H1 (cell line): ENCODE measurements at regions of chr2 and their contacts with region 1.

Region 1: DNA sequence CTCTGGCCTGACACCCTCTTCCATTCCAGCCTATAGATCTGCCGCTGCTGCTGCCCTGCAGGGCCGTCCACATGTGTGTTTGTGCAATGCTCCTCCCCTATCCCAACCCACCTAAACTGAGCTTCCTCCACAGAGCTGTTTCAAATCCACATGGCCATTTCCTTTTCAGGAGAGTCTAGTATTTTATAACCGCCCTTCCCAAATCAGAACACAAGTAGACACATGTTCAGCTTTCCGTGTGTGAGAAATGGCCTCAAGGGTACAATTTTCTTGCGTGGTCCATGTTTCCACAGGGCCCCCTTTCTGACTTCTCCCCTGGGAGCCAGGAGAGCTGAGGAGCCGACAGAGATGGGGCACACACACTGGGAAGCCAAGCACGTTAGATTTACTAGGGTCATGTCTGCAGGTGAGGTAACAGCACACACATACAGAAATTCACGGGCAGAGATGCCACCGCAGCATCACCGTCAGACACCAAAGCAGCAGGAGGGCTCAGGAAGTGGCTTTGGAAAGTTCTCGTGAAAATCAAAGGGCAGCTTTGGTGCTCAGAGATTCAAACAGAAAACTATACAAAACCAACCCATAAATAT is 102.9 kb upstream of the TGFA start:
- DNase-seq: peak in 1 of 2 experiments; percentile 43
- H3K4me3 ChIP-seq: no peak overlapping the region
- H3K27ac ChIP-seq: no peak overlapping the region
- H3K4me1 ChIP-seq: peaks cover 0 to 5% (median 0%) of the 10 kb centered on the region in 4 experiments; a peak in 2 of 7 replicates
- H3K27me3 ChIP-seq: peaks cover 2 to 7% (median 3%) of the 10 kb centered on the region in 4 experiments; a peak in 5 of 7 replicates
- CTCF ChIP-seq: no peak
- EP300 ChIP-seq: no peak
- POLR2A ChIP-seq: peak in 1 of 2 experiments; percentile 8; a peak in 1 of 3 replicates
- RAD21 ChIP-seq: no peak

Region 2: DNA sequence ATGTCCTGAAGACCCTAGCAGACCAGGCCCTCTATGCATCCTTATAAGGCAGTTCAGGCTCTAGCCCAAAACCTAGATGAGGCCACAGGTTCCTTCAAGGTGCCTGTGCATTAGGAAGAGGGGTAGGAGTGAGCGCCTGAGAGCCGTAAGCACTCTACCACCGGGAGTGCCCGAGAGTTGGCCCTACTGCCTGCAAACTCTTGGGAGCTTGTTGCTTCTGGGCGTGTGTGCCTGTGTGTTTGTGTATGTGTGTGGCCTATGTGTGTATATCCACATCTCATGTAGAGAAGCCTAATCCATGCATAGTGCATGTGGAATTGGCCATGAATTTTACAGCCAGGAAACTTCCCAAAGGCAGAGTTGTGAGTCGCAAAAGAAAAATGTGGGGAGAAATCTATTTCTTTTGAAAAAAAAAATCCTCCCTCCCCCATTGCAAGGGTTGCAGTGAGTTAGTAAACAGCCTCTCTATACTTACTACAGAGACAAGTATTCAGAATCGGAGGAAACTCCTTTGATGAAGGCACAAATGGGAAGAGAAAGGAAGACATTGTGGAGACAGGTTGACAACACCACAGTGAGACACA is 14.7 kb after region 1 on chr2:
- CTCF ChIA-PET with region 1: interaction called, 18 read pairs
- POLR2A ChIA-PET with region 1: interaction called, 5 read pairs
- DNase-seq: no peak
- H3K4me3 ChIP-seq: no peak overlapping the region
- H3K27ac ChIP-seq: no peak overlapping the region
- H3K4me1 ChIP-seq: no peaks in the 10 kb centered on the region
- H3K27me3 ChIP-seq: no peaks in the 10 kb centered on the region
- CTCF ChIP-seq: no peak
- EP300 ChIP-seq: no peak
- POLR2A ChIP-seq: no peak
- RAD21 ChIP-seq: no peak